Natural killer cell (primary cell): ENCODE measurements at regions of chr12 and their contacts with region 1.

Region 1: DNA sequence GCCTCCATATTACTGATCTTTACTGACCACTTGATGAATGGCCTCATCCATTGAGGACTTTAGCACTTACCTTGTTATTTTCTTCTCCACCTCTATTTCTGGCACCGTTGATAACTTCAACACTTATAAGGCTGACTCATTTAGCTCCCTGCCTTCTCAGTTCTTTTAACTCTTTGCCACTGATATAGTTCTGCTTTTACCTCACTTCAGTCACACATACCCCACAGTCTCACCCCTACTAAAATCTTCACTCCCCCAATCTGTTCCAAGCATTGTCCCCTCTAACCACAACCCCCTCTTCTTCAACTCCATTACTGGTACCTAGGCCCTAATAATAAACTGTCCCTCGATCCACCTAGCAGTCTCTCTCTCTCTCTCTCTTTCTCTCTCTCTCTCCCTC is 141.0 kb downstream of the PAH start:
- DNase-seq: no peak
- ATAC-seq: no peak
- H3K4me3 ChIP-seq: no peak overlapping the region
- H3K4me3 Mint-ChIP-seq: no peak overlapping the region
- H3K27ac ChIP-seq: no peak overlapping the region
- H3K27ac Mint-ChIP-seq: no peak overlapping the region
- H3K4me1 ChIP-seq: no peaks in the 10 kb centered on the region
- H3K4me1 Mint-ChIP-seq: no peaks in the 10 kb centered on the region
- H3K27me3 ChIP-seq: no peaks in the 10 kb centered on the region
- H3K27me3 Mint-ChIP-seq: peaks cover 2 to 6% of the 10 kb centered on the region in 2 donors
- CTCF ChIP-seq: no peak

Region 2: DNA sequence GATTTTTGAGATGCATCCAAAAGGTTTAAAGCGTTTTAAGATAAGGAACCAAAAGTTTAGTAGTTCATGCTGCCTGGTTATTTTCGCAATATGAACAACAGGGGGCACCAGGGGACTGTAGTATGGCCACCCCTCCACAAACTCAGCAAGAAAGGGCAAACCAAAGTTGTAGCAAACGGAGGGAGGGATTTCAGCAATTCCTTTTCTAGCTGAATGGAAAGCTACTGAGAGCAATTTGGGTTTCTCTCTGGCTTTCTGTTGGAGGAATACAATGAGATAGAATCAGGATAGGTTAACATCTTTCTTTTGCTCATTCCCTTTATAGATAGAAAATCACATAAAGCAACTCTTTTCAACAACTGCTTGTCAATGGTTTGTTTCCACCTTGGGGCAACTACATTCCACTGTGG is 836.2 kb before region 1 on chr12:
- intact Hi-C with region 1: loop called (anchors 10 kb)
- DNase-seq: peak; percentile 21 to 76
- ATAC-seq: peak; percentile 61 to 76 (median 65)
- H3K4me3 ChIP-seq: no peak overlapping the region
- H3K4me3 Mint-ChIP-seq: no peak overlapping the region
- H3K27ac ChIP-seq: no peak overlapping the region
- H3K27ac Mint-ChIP-seq: no peak overlapping the region
- H3K4me1 ChIP-seq: no peaks in the 10 kb centered on the region
- H3K4me1 Mint-ChIP-seq: no peaks in the 10 kb centered on the region
- H3K27me3 ChIP-seq: no peaks in the 10 kb centered on the region
- H3K27me3 Mint-ChIP-seq: peaks cover 16 to 37% of the 10 kb centered on the region in 2 donors
- CTCF ChIP-seq: peak; percentile 62